ENCODE measurements at regions of chr2 and their contacts with region 1.

Region 1: DNA sequence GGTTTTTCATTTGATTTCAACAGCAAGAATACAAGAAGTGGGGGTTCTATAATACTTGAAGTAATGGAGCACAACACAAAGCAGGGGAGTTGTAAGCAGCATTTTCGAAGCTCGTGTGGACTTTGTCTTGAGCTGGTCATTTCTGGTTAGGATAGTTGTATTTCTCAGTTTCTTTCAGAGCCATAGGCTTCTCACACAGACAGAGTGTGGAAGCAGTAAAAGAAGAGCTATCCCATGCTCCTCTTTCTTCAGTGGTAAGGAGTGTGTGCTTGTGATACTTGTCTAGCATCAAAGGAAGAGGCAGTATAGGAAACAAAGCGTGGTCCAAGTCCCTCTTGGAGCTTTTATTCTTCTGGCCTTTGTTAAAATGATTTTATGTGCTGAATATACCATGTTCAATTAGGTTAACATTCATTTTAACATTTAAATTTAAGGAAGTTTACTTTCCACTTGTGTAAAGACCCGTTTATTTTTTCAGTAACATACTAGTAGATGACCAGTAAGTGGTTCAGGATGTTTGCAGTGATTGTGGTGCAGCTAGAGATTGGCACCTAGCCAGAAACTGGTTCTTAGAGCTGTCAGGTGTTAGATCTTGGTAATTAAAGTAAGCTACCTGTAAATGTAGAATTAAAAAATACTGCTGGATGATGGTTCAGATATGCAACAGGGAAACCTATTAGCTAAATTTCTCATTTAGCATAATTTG is 14.6 kb downstream of the CCNYL1 start:
- DNase-seq: peak; percentile 62
- H3K4me3 ChIP-seq: no peak overlapping the region
- H3K27ac ChIP-seq: no peak overlapping the region
- H3K4me1 ChIP-seq: peaks cover 20% of the 10 kb centered on the region
- H3K27me3 ChIP-seq: no peaks in the 10 kb centered on the region
- CTCF ChIP-seq: no peak
- POLR2A ChIP-seq: no peak

Region 2: GRCh38 chr2:207710814-207711740 is 14.9 kb before region 1 on chr2 and contains the start of gene CCNYL1:
- CTCF ChIA-PET with region 1: interaction called, 6 read pairs
- POLR2A ChIA-PET with region 1: interaction called, 9 read pairs
- dilution Hi-C with region 1: no loop called
- intact Hi-C with region 1: loop called (anchors 2 kb)
- DNase-seq: peak; percentile 100
- H3K4me3 ChIP-seq: peak within 1 kb of the TSS; percentile 78 to 88 (median 78)
- H3K27ac ChIP-seq: peak within 1 kb of the TSS; percentile 86
- H3K4me1 ChIP-seq: peaks cover 21% of the 10 kb centered on the region
- H3K27me3 ChIP-seq: no peaks in the 10 kb centered on the region
- CTCF ChIP-seq: peak in 1 of 2 donors; percentile 3
- POLR2A ChIP-seq: peak; percentile 69
- total RNA-seq, gene CCNYL1: 47.3 and 49.3 TPM in 2 replicates